Tibial artery (tissue), 4 donors: ENCODE measurements at regions of chr1 and their contacts with region 1.

Region 1: DNA sequence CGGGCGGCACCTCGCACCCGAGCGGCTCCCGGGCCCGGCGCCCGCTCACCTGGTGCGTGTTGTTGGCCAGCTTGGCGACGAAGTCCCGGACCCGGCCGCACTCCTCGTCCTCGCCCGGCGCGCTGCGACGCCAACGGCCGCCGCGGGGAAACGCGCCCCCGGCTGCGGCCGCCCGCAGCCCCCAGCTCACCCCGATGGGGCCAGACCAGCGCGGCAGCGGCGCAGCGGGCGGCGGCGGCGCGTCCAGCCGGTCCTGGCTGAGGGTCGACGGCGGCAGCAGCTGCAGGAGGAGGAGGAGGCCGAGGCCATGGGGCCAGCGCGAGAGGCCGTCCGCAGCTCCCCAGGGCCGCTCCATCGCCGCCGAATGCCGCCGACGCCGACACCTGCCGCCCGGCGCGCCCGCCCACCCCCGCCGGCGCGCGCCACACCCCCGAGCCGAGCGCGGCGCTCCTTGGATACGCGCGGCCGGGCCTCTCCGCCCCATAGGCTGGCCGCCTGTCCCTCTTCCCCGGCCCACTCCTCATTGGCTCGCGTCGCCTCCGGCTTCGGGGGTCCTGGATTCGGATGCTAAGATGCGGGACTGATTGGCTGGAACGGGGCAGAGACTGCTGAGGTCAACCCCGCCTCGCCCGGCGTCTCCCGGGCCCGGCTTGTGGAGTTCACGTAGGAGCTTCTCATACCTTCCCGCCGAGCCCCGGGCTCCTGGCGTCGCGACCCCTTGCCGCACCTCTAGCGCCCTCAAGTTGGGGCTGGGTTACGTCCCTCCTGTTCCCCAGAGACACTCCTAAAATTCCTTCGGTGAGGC is at the start of gene SORT1:
- DNase-seq: peak; percentile 83 to 93
- H3K4me3 ChIP-seq: peak within 1 kb of the TSS; percentile 66 to 69
- H3K27ac ChIP-seq: peak within 1 kb of the TSS; percentile 82 to 87
- H3K4me1 ChIP-seq: peaks cover 0 to 54% (median 26%) of the 10 kb centered on the region in 4 donors
- H3K27me3 ChIP-seq: no peaks in the 10 kb centered on the region
- CTCF ChIP-seq: no peak

Region 2: DNA sequence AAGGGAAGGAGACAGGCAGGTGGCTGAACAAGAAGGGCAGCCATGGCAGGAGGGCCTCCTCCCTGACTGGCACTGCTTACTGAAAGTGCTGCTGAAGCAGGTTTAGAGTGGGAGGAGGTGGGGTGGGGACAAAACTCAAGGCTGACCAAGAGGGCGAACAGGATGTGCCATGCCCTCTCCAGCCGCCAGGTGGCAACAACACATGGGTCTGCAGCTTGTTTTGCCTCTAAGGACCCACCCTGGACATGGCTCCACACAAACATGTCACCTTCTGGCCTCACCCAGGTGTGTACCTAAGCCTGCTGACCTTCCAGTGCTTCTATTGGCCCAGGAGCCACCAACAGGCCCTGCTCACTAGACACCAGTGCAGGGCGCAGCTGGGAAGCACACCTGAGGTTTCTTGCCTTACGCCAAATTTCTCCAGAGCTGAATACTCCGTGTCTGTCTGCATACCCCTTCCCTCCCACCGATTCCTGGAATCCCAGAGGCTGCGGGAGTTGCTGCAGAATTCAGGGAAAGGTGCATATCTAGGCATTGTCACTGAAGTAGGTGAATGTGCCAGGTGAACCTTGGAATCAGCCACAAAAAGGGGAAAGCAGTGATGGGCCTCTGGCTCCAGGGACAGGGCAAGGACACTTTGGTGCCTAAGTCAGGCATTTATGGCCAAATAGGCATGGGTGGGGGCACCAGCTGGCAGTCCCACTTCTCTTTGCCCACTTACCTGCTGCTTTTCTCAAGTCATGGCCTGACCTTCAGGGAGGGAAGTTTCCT is 120.1 kb before region 1 on chr1:
- intact Hi-C with region 1: loop called (anchors 2 kb)
- DNase-seq: peak; percentile 74 to 84
- H3K4me3 ChIP-seq: no peak overlapping the region
- H3K27ac ChIP-seq: peak overlapping the region in 1 of 2 donors; percentile 35
- H3K4me1 ChIP-seq: peaks cover 0 to 23% (median 21%) of the 10 kb centered on the region in 4 donors
- H3K27me3 ChIP-seq: no peaks in the 10 kb centered on the region
- CTCF ChIP-seq: peak; percentile 89 to 91

Region 3: DNA sequence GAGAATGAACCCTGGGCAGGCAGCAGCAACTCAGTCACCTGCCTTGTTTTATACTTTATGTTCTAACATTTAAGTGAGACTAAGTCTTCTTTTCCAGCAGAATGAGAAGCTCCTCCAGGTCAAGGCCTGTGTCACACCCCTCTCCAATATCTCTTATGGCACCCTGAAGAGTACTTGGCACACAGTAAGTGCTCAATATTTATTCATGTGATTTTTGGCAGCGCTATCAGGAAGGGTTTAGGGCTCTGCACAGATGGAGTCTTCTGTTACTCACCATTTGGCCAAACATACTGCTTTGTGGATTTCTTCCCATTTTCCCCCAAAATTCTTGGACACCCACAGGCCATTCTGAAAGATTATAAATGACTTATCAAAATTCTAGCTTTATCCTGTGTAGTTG is 47.1 kb before region 1 on chr1:
- intact Hi-C with region 1: loop called (anchors 5 kb)
- DNase-seq: no peak
- H3K4me3 ChIP-seq: no peak overlapping the region
- H3K27ac ChIP-seq: peak overlapping the region in 1 of 2 donors; percentile 12
- H3K4me1 ChIP-seq: peaks cover 0 to 43% (median 2%) of the 10 kb centered on the region in 4 donors
- H3K27me3 ChIP-seq: no peaks in the 10 kb centered on the region
- CTCF ChIP-seq: no peak